A549 (cell line): ENCODE measurements at regions of chr2 and their contacts with region 1.

Region 1: GRCh38 chr2:65350684-65351083 is 81.7 kb downstream of the SPRED2 start:
- DNase-seq: peak; percentile 41 to 61
- ATAC-seq: peak; percentile 87 to 90
- H3K4me3 ChIP-seq: no peak overlapping the region
- H3K27ac ChIP-seq: no peak overlapping the region
- H3K4me1 ChIP-seq: peaks cover 30% of the 10 kb centered on the region
- CTCF ChIP-seq: no peak
- EP300 ChIP-seq: no peak
- POLR2A ChIP-seq: no peak
- RAD21 ChIP-seq: no peak

Region 2: GRCh38 chr2:65366595-65367125 is 16.0 kb after region 1 on chr2:
- CTCF ChIA-PET with region 1: interaction called, 14 read pairs
- POLR2A ChIA-PET with region 1: interaction called, 4 read pairs
- DNase-seq: peak; percentile 93 to 96
- ATAC-seq: peak; percentile 93 to 94
- H3K4me3 ChIP-seq: peak overlapping the region; percentile 25
- H3K27ac ChIP-seq: peak overlapping the region; percentile 39 to 73; a peak in 5 of 6 replicates
- H3K4me1 ChIP-seq: peaks cover 62% of the 10 kb centered on the region
- CTCF ChIP-seq: no peak
- EP300 ChIP-seq: peak; percentile 23 to 26; a peak in 1 of 5 replicates
- POLR2A ChIP-seq: no peak
- RAD21 ChIP-seq: peak; percentile 14 to 20; a peak in 1 of 5 replicates